ENCODE measurements at regions of chr14 and their contacts with region 1.

Region 1: GRCh38 chr14:21557084-21557901 is 22.6 kb downstream of the OR10G3 start:
- DNase-seq: peak; percentile 85 to 91
- H3K4me3 ChIP-seq: peak overlapping the region; percentile 10
- H3K4me3 Mint-ChIP-seq: peak overlapping the region; percentile 74
- H3K27ac Mint-ChIP-seq: peak overlapping the region; percentile 98
- H3K4me1 ChIP-seq: peaks cover 15% of the 10 kb centered on the region; the same call in 1 of the 2 replicates
- H3K4me1 Mint-ChIP-seq: peaks cover 14% of the 10 kb centered on the region
- H3K27me3 ChIP-seq: no peaks in the 10 kb centered on the region
- H3K27me3 Mint-ChIP-seq: no peaks in the 10 kb centered on the region
- CTCF ChIP-seq: peak; percentile 60 to 66

Region 2: DNA sequence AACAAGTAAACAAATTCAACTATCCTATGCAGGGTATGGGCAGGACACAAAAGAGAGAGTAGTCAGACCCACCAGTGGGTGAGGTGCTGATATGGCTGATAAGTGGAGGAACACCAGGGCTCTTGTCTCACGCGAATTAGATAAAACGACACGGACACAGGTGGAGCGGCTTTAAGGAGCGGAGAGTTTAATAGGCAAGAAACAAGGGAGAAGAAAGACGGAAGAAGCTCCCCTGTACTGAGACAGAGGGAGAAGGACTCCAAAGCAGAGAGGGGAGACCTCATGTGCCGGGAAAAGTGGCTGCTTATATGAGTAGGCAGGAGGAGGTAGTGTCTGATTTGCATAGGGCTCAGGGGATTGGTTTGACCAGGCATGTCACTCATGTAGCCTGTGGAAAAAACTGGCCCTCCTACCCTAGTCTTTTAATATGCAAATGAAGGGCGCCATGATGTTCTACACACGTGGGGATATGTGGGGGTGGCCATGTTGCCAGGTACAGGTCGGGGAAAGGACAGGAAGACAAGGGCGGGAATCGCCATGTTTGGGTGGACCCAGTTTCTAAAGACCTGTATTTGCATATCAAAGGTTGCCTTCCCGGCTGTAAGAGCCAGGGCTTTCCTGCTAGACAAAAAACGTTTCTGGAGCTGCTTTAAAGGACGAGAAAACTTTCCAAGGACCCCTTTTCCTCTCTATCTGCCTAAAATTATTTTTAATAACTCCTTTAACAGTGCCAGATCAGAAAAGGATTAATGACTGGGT is 248.6 kb before region 1 on chr14:
- CTCF ChIA-PET with region 1: no interaction called
- POLR2A ChIA-PET with region 1: no interaction called
- intact Hi-C with region 1: loop called (anchors 2 kb)
- DNase-seq: peak; percentile 93 to 97
- H3K4me3 ChIP-seq: peak overlapping the region; percentile 36
- H3K4me3 Mint-ChIP-seq: peak overlapping the region; percentile 78
- H3K27ac Mint-ChIP-seq: peak overlapping the region; percentile 89
- H3K4me1 ChIP-seq: peaks cover 21% of the 10 kb centered on the region
- H3K4me1 Mint-ChIP-seq: no peaks in the 10 kb centered on the region
- H3K27me3 ChIP-seq: no peaks in the 10 kb centered on the region
- H3K27me3 Mint-ChIP-seq: no peaks in the 10 kb centered on the region
- CTCF ChIP-seq: no peak

Region 3: GRCh38 chr14:21455911-21456667 is 101.2 kb before region 1 on chr14 and contains the start of gene CHD8:
- CTCF ChIA-PET with region 1: interaction called, 3 read pairs
- POLR2A ChIA-PET with region 1: interaction called, 3 read pairs
- intact Hi-C with region 1: loop called (anchors 1 kb)
- DNase-seq: peak; percentile 99 to 100
- H3K4me3 ChIP-seq: peak within 1 kb of the TSS; percentile 75
- H3K4me3 Mint-ChIP-seq: peak within 1 kb of the TSS; percentile 95
- H3K27ac Mint-ChIP-seq: peak within 1 kb of the TSS; percentile 97
- H3K4me1 ChIP-seq: peaks cover 3% of the 10 kb centered on the region; the same call in 1 of the 2 replicates
- H3K4me1 Mint-ChIP-seq: peaks cover 10% of the 10 kb centered on the region
- H3K27me3 ChIP-seq: no peaks in the 10 kb centered on the region
- H3K27me3 Mint-ChIP-seq: no peaks in the 10 kb centered on the region
- CTCF ChIP-seq: peak; percentile 60 to 76
- total RNA-seq, gene CHD8: 84.9 and 89.8 TPM in 2 replicates

Region 4: GRCh38 chr14:21498553-21499526 is 58.5 kb before region 1 on chr14:
- CTCF ChIA-PET with region 1: interaction called, 14 read pairs
- POLR2A ChIA-PET with region 1: interaction called, 3 read pairs
- intact Hi-C with region 1: loop called (anchors 1 kb)
- DNase-seq: peak in 1 of 2 experiments; percentile 70
- H3K4me3 ChIP-seq: no peak overlapping the region
- H3K4me3 Mint-ChIP-seq: no peak overlapping the region
- H3K27ac Mint-ChIP-seq: peak overlapping the region; percentile 22
- H3K4me1 ChIP-seq: 0 out of 2 replicates have a peak, but pooled peaks cover 11% of the 10 kb centered on the region
- H3K4me1 Mint-ChIP-seq: peaks cover 25% of the 10 kb centered on the region
- H3K27me3 ChIP-seq: no peaks in the 10 kb centered on the region
- H3K27me3 Mint-ChIP-seq: no peaks in the 10 kb centered on the region
- CTCF ChIP-seq: peak; percentile 30

Region 5: DNA sequence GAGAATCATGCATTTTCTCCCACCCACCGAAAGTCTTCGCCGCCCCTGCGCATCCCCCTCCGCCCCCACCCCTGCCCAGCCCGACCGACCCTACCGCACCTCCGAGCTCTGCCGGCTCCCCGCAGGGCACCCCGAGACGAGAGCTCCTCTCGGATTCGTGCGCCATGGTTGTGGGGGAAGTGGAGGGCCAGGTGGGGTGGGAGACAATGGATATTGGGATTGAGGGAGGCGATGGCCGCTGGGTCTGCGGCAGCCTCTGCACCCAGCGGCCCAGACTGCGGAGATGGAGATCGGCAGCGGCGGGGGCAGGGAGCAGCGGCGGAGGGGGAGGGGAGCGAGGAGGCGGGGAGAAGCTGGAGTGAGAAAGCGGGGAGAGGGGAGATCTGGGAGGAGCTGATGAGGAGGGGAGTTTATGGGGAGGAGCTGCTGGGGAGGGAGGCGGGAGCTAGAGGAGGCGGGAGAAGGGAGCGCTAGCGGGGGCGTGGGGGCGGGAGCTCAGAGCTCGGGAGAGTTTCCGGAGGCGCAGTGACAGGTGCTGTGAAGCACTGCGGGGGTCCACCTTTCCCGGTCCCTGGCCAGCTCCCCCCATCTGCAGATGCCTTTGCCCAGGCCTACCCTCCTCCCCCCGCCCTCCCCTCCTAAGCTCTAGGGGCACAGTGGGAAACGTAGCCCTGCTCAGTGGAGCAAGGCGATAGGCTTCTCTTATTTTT is 31.2 kb before region 1 on chr14 and contains the start of gene SALL2:
- CTCF ChIA-PET with region 1: interaction called, 6 read pairs
- POLR2A ChIA-PET with region 1: interaction called, 6 read pairs
- intact Hi-C with region 1: loop called (anchors 1 kb)
- DNase-seq: peak; percentile 79 to 89
- H3K4me3 ChIP-seq: peak within 1 kb of the TSS; percentile 79
- H3K4me3 Mint-ChIP-seq: peak within 1 kb of the TSS; percentile 74
- H3K27ac Mint-ChIP-seq: peak within 1 kb of the TSS; percentile 72
- H3K4me1 ChIP-seq: peaks cover 9% of the 10 kb centered on the region
- H3K4me1 Mint-ChIP-seq: peaks cover 13% of the 10 kb centered on the region
- H3K27me3 ChIP-seq: no peaks in the 10 kb centered on the region
- H3K27me3 Mint-ChIP-seq: no peaks in the 10 kb centered on the region
- CTCF ChIP-seq: no peak
- total RNA-seq, gene SALL2: 10.9 and 11.0 TPM in 2 replicates